Posterior cingulate gyrus (tissue), 11 donors: ENCODE measurements at regions of chr4 and their contacts with region 1.

Region 1: DNA sequence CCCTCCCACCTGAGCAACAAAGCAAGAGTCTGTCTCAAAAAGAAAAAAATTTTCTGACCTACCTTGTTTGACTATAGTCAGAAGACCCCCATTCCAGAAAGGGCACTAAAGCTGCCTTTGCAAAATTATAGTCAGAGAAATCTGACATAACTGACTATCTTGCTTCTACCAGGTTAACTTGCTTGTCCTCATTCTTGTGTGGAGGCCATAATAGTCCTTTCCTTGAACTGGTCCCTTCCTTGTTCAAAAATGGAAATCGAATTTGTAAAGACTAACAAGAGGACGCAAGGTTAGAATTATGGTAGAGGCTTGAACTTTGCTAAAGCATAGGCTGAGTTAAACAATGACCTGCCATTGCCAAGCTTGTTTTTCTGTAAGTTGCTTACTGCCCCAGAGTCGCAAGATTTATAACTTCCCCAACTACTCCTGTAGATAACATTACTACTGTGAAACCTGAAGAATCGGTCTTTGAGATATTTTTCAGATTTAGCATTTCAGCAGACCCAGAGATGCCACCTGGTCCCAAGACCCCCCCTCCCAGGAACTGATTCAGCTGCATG is 45.2 kb downstream of the RAB33B start:
- DNase-seq: no peak

Region 2: GRCh38 chr4:139367421-139368090 is 131.6 kb before region 1 on chr4:
- intact Hi-C with region 1: no loop called
- DNase-seq: no peak

Region 3: DNA sequence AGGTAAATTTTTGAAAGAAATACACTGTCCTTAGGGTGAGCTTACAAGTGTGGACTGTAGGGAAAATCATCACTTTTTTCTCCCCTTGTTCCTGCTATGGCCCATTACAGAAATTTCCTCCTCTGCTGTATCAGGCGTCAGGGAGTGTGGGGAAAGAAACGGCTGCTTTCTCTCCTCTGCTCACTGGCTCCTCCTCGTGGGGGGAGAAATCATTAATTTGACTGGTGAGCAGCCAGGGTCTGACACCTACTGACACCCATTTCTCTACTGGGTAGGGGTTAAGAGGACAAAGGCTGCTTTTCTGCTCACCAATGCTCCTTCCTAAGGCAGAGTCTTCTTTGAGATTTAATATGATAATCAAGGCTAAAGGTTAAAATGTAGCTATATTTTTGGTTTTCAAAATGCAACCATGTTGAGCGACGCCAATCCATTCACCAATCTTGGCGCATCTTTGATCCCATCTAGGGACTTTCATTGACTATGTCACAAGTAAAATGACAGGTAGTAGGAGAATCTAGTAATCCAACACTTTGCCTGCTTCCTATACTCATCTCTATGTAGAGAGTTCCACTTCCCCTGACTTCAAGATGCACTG is 31.8 kb after region 1 on chr4:
- intact Hi-C with region 1: loop called (anchors 5 kb)
- DNase-seq: peak in 5 of 10 donors; percentile 42 to 86 (median 69)

Region 4: GRCh38 chr4:139633661-139634060 is 134.6 kb after region 1 on chr4:
- intact Hi-C with region 1: loop called (anchors 5 kb)
- DNase-seq: peak in 4 of 10 donors; percentile 20 to 88 (median 37)

Region 5: GRCh38 chr4:141011901-141012315 is 1512.8 kb after region 1 on chr4:
- intact Hi-C with region 1: no loop called
- DNase-seq: peak in 8 of 10 donors; percentile 12 to 89 (median 22)